A673 (cell line): ENCODE measurements at regions of chr12 and their contacts with region 1.

Region 1: DNA sequence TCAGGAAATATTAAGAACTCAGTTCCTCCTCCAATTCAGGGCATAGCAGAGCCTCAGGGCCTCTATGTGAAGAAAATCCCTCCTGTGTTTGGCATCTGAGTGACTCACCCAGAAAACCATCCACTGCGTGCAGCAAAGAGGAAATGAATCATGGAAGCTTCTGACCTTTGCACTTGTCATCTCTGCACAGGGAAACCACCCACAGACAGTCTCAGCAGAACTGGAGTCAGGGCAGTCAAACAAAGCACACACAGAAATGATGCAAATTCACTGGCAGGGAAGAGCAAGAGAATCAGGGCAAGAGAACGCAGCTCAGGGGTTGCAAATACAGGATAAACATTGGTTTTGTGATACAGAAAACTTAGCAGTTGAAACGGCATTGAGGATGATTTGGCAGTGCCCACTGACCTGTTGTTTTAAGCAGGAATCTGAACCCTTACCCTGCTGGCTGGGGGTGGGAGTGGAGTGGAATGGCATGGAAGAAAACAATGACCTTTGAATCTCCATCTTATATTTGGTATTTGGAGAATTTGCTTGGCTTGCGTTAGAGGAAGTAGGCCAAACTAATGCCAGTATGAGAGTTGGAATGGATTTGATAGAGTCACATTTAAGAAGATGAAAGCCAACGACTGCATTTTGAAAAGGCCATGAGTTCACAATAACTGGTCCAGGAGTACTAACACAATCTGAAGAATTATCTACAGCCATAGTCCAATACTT is 53.5 kb downstream of the PHLDA1 start:
- DNase-seq: peak; percentile 98
- H3K4me3 ChIP-seq: no peak overlapping the region
- H3K27ac ChIP-seq: peak overlapping the region; percentile 85
- H3K4me1 ChIP-seq: peaks cover 43% of the 10 kb centered on the region
- H3K27me3 ChIP-seq: no peaks in the 10 kb centered on the region
- CTCF ChIP-seq: no peak

Region 2: DNA sequence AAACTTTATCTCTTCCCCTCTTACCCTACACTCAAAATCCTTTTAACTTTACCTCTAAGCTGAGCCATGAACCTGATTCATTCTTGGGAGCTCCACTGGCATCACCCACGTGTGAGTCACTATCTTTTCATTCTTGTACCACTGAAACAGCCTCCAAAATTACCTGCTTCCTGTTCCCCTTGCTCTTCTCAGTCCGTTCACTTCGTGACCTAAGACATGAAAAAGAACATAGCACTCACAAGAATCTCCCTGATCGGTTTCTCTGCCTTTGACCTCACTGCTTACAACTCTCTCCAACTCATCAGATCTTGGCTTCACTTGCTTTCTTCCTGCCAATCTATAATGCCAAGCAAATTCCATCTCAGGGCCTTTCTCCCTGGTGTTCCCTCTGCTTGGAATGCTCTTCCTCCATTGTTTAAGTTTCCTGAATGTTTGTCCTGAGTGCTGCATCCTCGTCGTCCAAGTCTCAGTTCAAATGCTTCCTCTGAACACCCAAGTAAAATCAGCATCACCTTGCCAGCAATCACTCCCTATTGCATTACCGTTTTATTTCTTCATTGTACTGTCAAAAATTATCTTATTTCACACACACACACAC is 488.4 kb before region 1 on chr12:
- CTCF ChIA-PET with region 1: no interaction called
- POLR2A ChIA-PET with region 1: no interaction called
- intact Hi-C with region 1: no loop called
- DNase-seq: no peak
- H3K4me3 ChIP-seq: no peak overlapping the region
- H3K27ac ChIP-seq: no peak overlapping the region
- H3K4me1 ChIP-seq: peaks cover 15% of the 10 kb centered on the region
- H3K27me3 ChIP-seq: no peaks in the 10 kb centered on the region
- CTCF ChIP-seq: no peak

Region 3: DNA sequence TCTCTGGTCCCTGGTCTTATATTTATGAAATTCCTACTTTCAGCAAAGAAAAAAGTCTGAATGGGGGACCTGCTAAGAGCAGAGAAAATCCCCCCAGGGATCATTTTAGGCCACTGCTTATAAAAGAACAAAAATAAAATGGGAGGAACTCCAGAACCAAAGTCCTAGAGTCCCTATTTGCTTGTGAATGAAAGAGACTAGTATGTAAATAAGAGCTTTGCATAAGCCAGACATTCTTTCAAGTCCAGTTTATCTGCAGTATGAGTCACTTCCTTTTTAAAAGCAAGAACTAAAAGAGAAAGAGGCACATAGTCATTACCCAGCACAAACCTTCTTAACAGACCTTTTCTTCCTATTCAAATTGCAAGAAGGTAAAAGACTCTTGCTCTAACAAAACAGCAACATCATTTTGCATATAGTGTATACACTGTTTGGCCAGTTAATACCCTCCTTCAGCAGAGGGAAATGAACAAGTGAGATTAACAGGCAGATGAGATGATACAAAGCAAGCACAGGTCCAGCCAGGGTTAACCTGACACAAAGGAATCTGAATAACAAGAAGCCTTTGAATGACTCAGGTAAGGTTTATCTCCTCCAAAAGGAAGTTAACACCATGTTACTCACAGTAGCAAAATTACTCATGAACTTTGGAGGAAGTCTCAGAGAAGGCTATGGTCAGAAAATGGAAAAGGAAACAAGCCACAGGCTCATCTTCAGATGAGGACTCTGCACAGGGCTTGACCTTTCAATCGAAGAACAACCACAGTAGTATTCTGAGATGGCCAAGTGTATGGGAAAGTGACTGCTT is 33.8 kb before region 1 on chr12:
- CTCF ChIA-PET with region 1: no interaction called
- POLR2A ChIA-PET with region 1: no interaction called
- intact Hi-C with region 1: loop called (anchors 5 kb)
- DNase-seq: peak; percentile 91
- H3K4me3 ChIP-seq: no peak overlapping the region
- H3K27ac ChIP-seq: peak overlapping the region; percentile 71
- H3K4me1 ChIP-seq: peaks cover 19% of the 10 kb centered on the region
- H3K27me3 ChIP-seq: no peaks in the 10 kb centered on the region
- CTCF ChIP-seq: no peak

Region 4: DNA sequence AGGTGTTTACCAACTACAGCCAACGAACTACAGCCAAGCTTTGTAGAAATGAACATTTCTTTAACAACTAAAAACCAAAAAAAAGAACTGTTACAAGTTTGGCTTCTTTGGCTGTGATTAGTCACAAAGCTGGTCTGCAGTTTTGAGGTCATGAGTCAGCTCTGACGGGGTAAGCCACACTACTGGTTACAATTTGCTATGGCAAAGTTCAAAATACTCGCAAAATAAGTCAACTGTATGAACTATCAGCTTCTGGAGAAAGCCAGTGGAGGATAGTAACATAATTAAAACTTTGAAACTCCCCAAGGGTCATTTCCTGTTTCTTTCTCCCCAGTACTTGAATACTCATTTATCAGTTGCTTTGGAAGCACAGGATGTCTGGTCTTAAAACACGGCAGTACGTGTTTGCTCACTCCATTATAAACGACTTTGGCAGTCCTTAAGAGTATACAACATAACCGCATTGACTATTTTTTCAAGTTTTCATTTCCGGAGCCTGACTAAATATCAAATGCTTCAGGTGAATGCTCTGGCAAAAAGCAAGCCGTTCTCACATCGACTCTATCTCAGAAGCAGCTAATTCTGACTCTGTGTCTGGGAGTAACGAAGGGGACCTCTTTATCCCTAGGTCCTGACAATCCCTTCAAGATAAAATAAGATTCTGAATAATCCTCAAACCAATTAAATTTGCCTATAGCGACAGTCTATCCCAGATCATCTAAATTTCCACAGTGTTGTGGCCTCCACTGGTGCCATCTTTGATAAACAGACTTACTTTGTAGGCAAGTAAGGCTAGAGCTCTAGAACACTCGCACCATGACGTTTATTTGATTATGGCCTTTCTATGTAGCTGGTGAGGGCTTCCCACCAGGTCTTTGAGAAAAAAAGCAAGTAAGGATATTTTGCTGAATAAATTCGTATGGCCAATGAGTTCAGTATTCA is 42.9 kb after region 1 on chr12:
- CTCF ChIA-PET with region 1: no interaction called
- POLR2A ChIA-PET with region 1: no interaction called
- intact Hi-C with region 1: loop called (anchors 5 kb)
- DNase-seq: peak; percentile 75
- H3K4me3 ChIP-seq: no peak overlapping the region
- H3K27ac ChIP-seq: no peak overlapping the region
- H3K4me1 ChIP-seq: peaks cover 22% of the 10 kb centered on the region
- H3K27me3 ChIP-seq: no peaks in the 10 kb centered on the region
- CTCF ChIP-seq: no peak